IMR-90 (cell line): ENCODE measurements at regions of chr2 and their contacts with region 1.

Region 1: GRCh38 chr2:121071034-121071504 is 213.9 kb downstream of the TFCP2L1 start:
- DNase-seq: peak; percentile 31
- ATAC-seq: peak; percentile 69
- H3K4me3 ChIP-seq: no peak overlapping the region
- H3K27ac ChIP-seq: no peak overlapping the region
- H3K4me1 ChIP-seq: no peaks in the 10 kb centered on the region; the same call in 1 of the 2 replicates
- H3K27me3 ChIP-seq: peaks cover 36% of the 10 kb centered on the region
- CTCF ChIP-seq: peak; percentile 95
- POLR2A ChIP-seq: 0 out of 2 replicates have a peak, but pooled peaks have one; percentile 36
- RAD21 ChIP-seq: peak; percentile 92

Region 2: GRCh38 chr2:120360307-120360855 is 710.7 kb before region 1 on chr2:
- CTCF ChIA-PET with region 1: no interaction called
- POLR2A ChIA-PET with region 1: no interaction called
- dilution Hi-C with region 1: no loop called
- in situ Hi-C with region 1: no loop called
- intact Hi-C with region 1: no loop called
- DNase-seq: peak; percentile 55
- ATAC-seq: no peak
- H3K4me3 ChIP-seq: no peak overlapping the region
- H3K27ac ChIP-seq: no peak overlapping the region
- H3K4me1 ChIP-seq: peaks cover 1% of the 10 kb centered on the region; the same call in 1 of the 2 replicates
- H3K27me3 ChIP-seq: peaks cover 70% of the 10 kb centered on the region
- CTCF ChIP-seq: no peak
- POLR2A ChIP-seq: no peak
- RAD21 ChIP-seq: no peak

Region 3: DNA sequence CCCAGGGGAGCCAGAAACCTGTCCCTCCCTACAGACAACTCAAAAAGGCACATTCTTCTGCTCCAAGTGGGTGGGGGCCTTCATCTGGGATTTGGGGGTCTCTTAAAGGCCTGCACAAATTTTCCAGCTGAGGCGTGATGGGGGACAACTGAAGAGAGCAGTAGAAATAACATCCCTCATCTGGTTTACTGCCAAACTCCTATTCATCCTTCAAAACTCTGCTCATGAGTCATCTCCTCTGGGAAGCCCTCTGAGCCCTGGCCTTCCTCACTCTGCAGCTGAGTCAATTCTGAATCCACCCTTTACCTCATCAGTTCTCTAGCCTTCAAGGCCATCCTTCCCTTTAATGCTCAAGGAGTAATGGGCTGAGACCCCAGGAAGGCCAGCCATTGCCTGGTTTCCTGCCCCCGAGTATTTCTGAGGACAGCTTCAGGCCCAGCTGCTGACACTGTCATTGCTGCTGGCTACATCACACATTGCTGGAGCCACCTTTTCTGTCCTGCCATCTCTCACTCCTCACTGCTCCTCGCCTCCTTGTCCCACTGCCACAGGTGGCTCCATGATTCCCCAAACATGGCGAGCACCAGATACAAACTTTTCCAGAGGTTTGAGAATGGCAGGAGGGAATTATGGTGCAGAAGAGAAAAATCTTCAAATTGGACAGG is 367.6 kb before region 1 on chr2:
- CTCF ChIA-PET with region 1: interaction called, 3 read pairs
- POLR2A ChIA-PET with region 1: no interaction called
- dilution Hi-C with region 1: loop called (anchors 10 kb)
- in situ Hi-C with region 1: loop called (anchors 5 kb)
- intact Hi-C with region 1: no loop called
- DNase-seq: peak; percentile 91
- ATAC-seq: peak; percentile 93
- H3K4me3 ChIP-seq: no peak overlapping the region
- H3K27ac ChIP-seq: peak overlapping the region; percentile 44; the same call in 1 of the 2 replicates
- H3K4me1 ChIP-seq: peaks cover 4% of the 10 kb centered on the region
- H3K27me3 ChIP-seq: no peaks in the 10 kb centered on the region
- CTCF ChIP-seq: no peak
- POLR2A ChIP-seq: no peak
- RAD21 ChIP-seq: no peak

Region 4: DNA sequence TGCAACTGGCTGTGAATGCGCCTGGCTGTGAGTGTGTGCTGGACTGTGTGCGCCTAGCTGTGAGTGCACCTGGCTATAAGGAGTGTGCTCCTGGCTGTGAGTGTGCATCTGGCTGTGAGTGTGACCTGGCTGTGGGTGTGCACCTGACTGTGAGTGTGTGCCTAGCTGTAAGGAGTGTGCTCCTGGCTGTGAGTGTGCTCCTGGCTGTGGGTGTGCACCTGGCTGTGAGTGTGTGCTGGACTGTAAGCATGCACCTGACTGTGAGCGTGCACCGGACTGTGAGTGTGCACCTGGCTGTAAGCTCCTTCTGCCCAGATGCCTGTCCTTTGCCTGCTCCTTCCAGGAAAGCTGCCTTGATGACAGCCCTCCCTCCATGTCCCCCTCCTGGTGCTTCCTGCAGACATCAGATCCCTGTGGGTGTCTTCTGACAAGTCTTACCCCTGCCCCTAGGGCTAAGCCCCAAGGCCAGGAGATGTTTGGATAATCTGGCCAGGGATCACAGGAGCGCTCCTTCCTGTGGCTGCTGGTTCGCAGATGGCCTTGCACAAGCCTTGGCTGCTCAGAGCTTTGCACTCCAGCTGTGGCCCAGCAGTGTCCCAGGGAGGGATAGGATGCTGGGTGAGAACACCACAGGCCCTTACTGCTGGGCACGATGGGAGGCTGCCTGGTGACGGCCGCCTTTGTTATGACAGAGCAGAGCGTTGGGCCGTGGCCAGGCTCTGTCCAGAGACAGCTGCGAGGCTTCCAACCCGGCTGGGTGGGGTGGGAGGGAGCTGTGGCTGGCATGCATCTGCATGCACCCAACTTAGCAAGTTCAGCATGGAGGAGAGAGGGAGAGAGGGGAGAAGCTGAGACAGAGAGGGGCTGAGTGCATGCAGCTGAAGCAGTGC is 245.5 kb before region 1 on chr2:
- CTCF ChIA-PET with region 1: interaction called, 4 read pairs
- POLR2A ChIA-PET with region 1: interaction called, 3 read pairs
- dilution Hi-C with region 1: no loop called
- in situ Hi-C with region 1: no loop called
- intact Hi-C with region 1: loop called (anchors 2 kb)
- DNase-seq: peak; percentile 90
- ATAC-seq: peak; percentile 92
- H3K4me3 ChIP-seq: no peak overlapping the region
- H3K27ac ChIP-seq: peak overlapping the region; percentile 63
- H3K4me1 ChIP-seq: peaks cover 33% of the 10 kb centered on the region
- H3K27me3 ChIP-seq: no peaks in the 10 kb centered on the region
- CTCF ChIP-seq: no peak
- POLR2A ChIP-seq: no peak
- RAD21 ChIP-seq: no peak

Region 5: GRCh38 chr2:120978359-120979050 is 92.6 kb before region 1 on chr2:
- CTCF ChIA-PET with region 1: no interaction called
- POLR2A ChIA-PET with region 1: no interaction called
- dilution Hi-C with region 1: no loop called
- in situ Hi-C with region 1: no loop called
- intact Hi-C with region 1: loop called (anchors 2 kb)
- DNase-seq: peak; percentile 27
- ATAC-seq: peak; percentile 65
- H3K4me3 ChIP-seq: no peak overlapping the region
- H3K27ac ChIP-seq: no peak overlapping the region
- H3K4me1 ChIP-seq: 0 out of 2 replicates have a peak, but pooled peaks cover 2% of the 10 kb centered on the region
- H3K27me3 ChIP-seq: no peaks in the 10 kb centered on the region
- CTCF ChIP-seq: no peak
- POLR2A ChIP-seq: no peak
- RAD21 ChIP-seq: no peak

Region 6: DNA sequence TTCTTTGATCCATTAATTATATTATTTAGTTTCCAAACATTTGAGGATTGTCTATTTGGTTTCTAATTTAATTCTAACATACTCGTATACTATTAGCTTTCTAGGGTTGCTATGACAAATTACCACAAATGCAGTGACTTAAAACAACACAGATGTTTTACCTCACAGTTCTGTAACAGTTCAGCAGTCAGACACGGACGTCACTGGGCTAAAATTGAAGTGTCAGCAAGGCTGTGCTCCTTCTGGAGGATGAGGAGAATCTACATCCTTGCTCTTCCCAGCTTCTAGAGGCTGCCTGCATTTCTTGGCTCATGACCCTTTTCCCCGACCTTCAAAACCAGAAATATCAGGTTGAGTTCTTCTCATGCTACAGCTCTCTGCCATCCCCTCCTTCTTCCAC is 96.3 kb after region 1 on chr2:
- CTCF ChIA-PET with region 1: no interaction called
- POLR2A ChIA-PET with region 1: no interaction called
- dilution Hi-C with region 1: no loop called
- in situ Hi-C with region 1: no loop called
- intact Hi-C with region 1: no loop called
- DNase-seq: no peak
- ATAC-seq: no peak
- H3K4me3 ChIP-seq: no peak overlapping the region
- H3K27ac ChIP-seq: no peak overlapping the region
- H3K4me1 ChIP-seq: no peaks in the 10 kb centered on the region
- H3K27me3 ChIP-seq: peaks cover 5% of the 10 kb centered on the region
- CTCF ChIP-seq: no peak
- POLR2A ChIP-seq: no peak
- RAD21 ChIP-seq: no peak